A549 (cell line): ENCODE measurements at regions of chr10 and their contacts with region 1.

Region 1: GRCh38 chr10:14623931-14624330 is 150.8 kb downstream of the FAM107B start:
- DNase-seq: no peak
- ATAC-seq: no peak
- H3K4me3 ChIP-seq: no peak overlapping the region
- H3K27ac ChIP-seq: no peak overlapping the region
- H3K4me1 ChIP-seq: no peaks in the 10 kb centered on the region
- CTCF ChIP-seq: no peak
- EP300 ChIP-seq: no peak
- POLR2A ChIP-seq: no peak
- RAD21 ChIP-seq: no peak

Region 2: GRCh38 chr10:14312014-14312413 is 311.9 kb before region 1 on chr10:
- CTCF ChIA-PET with region 1: no interaction called
- POLR2A ChIA-PET with region 1: no interaction called
- DNase-seq: no peak
- ATAC-seq: no peak
- H3K4me3 ChIP-seq: no peak overlapping the region
- H3K27ac ChIP-seq: no peak overlapping the region
- H3K4me1 ChIP-seq: no peaks in the 10 kb centered on the region
- CTCF ChIP-seq: no peak
- EP300 ChIP-seq: no peak
- POLR2A ChIP-seq: no peak
- RAD21 ChIP-seq: no peak

Region 3: GRCh38 chr10:14507176-14507575 is 116.8 kb before region 1 on chr10:
- CTCF ChIA-PET with region 1: no interaction called
- POLR2A ChIA-PET with region 1: no interaction called
- DNase-seq: no peak
- ATAC-seq: no peak
- H3K4me3 ChIP-seq: no peak overlapping the region
- H3K27ac ChIP-seq: no peak overlapping the region
- H3K4me1 ChIP-seq: no peaks in the 10 kb centered on the region
- CTCF ChIP-seq: no peak
- EP300 ChIP-seq: no peak
- POLR2A ChIP-seq: no peak
- RAD21 ChIP-seq: no peak

Region 4: GRCh38 chr10:14635043-14635710 is 11.2 kb after region 1 on chr10:
- CTCF ChIA-PET with region 1: interaction called, 10 read pairs
- POLR2A ChIA-PET with region 1: no interaction called
- DNase-seq: no peak
- ATAC-seq: no peak
- H3K4me3 ChIP-seq: no peak overlapping the region
- H3K27ac ChIP-seq: 0 out of 6 replicates have a peak overlapping the region, but pooled peaks of 1 of the 2 experiments have one; percentile 13
- H3K4me1 ChIP-seq: no peaks in the 10 kb centered on the region
- CTCF ChIP-seq: no peak
- EP300 ChIP-seq: no peak
- POLR2A ChIP-seq: no peak
- RAD21 ChIP-seq: no peak